Left ventricle myocardium inferior (tissue), 1 donor: ENCODE measurements at regions of chr17 and their contacts with region 1.

Region 1: DNA sequence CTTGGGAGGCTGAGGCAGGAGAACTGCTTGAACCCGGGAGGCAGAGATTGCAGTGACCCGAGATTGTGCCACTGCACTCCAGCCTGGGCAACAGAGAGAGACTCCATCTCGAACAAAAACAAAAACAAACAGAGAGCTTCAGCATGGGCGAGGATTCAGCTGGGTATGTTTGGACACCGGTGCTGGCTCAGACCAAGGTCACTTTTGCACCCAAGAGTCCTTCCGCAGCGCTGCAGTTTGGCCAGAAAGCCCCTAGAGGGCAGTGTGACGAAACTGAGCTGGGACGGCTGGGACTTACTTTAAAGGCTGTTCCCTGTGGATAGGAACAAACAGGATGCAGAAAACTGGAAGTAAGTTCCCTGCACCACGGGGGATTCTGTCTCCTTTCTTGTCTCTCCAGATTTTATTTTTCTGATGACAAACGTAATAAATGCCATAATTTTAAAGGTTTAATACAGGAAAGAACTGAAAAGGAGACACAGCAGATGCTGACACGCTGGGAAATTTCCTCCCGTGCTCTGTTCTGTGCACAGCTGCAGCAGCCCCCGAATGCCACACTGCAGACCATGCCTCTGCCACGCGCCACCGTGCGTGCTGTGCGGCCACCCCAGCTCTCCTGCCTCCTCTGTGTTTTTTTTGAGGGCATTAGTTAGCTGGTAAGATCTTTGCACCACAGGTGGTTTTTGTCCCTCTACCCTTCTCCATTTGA is 25.2 kb upstream of the USP36 start:
- DNase-seq: peak; percentile 83
- H3K4me3 ChIP-seq: peak overlapping the region; percentile 37
- H3K27ac ChIP-seq: peak overlapping the region; percentile 53
- H3K4me1 ChIP-seq: peaks cover 29% of the 10 kb centered on the region
- H3K27me3 ChIP-seq: no peaks in the 10 kb centered on the region
- CTCF ChIP-seq: peak; percentile 96

Region 2: DNA sequence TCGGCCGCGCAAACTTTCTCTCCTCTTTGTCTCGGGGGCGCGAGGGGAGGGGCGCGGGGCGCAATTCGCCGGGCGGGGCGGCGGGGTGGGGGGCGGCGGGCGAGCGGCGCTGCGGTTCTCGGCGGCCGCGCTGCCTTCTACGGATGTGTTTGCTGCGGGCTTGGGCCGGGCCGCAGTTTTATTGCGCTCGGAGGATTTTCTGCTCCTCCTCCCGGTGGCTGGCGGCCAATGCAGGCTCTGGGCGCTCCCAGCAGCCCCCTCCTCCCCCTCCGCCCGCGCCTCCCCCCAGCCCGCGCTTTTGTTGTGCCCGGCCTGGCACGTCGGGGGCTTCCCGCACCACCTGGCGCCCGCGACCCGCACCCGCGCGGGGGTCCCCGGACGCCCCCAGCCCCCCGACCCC is 59.4 kb after region 1 on chr17 and contains the start of gene TIMP2:
- intact Hi-C with region 1: loop called (anchors 10 kb)
- DNase-seq: peak; percentile 93
- H3K4me3 ChIP-seq: peak within 1 kb of the TSS; percentile 87
- H3K27ac ChIP-seq: peak within 1 kb of the TSS; percentile 96
- H3K4me1 ChIP-seq: peaks cover 66% of the 10 kb centered on the region
- H3K27me3 ChIP-seq: no peaks in the 10 kb centered on the region
- CTCF ChIP-seq: peak; percentile 58
- total RNA-seq, gene TIMP2: 91.8 TPM

Region 3: DNA sequence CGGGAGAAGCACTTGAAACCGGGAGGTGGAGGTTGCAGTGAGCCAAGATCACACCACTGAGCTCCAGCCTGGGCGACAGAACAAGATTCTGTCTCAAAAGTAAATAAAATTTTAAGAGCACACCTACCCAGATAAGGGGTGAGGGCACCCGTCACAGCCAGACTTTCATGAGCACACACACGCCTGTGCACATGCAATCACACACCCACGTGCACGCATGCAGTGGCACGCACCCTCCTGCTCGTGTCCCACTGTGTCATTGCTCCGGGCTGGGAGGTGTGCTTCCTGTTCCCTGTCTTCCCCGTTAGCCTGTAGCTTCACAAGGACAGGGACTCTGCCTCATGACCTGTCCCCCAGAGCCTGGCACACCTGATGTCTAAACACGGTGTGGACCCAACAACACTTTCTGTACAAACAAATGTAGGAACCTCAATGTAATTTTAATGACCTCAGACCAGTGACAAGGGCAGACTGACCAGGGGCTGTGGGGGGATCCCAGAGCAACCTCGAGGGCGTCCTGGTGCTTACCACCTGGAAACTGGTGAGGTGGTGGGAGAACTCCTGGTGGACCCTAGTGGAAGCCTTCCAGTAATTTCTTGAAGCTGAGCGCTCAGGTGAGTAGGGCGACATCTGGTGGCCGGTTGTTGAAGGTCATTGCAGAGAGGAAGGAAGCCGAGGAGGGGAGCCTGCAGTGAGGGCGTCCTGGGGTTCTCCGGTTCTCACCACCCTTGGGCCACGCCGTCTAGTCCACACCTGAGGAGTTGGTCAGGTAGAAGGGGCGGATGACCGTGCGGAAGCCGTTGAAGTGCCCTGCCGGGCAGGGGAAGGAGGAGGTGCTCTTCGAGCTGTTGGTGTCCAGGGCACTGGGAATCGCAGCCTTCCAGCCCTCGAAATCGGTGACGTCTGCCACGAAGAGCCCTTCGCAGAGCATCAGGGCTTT is 105.3 kb after region 1 on chr17:
- intact Hi-C with region 1: loop called (anchors 5 kb)
- DNase-seq: peak; percentile 85
- H3K4me3 ChIP-seq: peak overlapping the region; percentile 31
- H3K27ac ChIP-seq: peak overlapping the region; percentile 75
- H3K4me1 ChIP-seq: peaks cover 52% of the 10 kb centered on the region
- H3K27me3 ChIP-seq: no peaks in the 10 kb centered on the region
- CTCF ChIP-seq: peak; percentile 94